ENCODE measurements at regions of chr1 and their contacts with region 1.

Region 1: GRCh38 chr1:32215629-32216480 is 6.3 kb downstream of the TMEM234 start:
- DNase-seq: peak in 2 of 3 donors; percentile 67 to 69
- ATAC-seq: peak; percentile 89 to 96 (median 94)
- H3K4me3 ChIP-seq: no peak overlapping the region
- H3K27ac ChIP-seq: peak overlapping the region in 1 of 3 donors; percentile 9
- H3K4me1 ChIP-seq: peaks cover 0 to under 1% (median 0%) of the 10 kb centered on the region in 4 donors
- H3K27me3 ChIP-seq: no peaks in the 10 kb centered on the region
- CTCF ChIP-seq: peak; percentile 73 to 87 (median 84)
- POLR2A ChIP-seq: no peak

Region 2: DNA sequence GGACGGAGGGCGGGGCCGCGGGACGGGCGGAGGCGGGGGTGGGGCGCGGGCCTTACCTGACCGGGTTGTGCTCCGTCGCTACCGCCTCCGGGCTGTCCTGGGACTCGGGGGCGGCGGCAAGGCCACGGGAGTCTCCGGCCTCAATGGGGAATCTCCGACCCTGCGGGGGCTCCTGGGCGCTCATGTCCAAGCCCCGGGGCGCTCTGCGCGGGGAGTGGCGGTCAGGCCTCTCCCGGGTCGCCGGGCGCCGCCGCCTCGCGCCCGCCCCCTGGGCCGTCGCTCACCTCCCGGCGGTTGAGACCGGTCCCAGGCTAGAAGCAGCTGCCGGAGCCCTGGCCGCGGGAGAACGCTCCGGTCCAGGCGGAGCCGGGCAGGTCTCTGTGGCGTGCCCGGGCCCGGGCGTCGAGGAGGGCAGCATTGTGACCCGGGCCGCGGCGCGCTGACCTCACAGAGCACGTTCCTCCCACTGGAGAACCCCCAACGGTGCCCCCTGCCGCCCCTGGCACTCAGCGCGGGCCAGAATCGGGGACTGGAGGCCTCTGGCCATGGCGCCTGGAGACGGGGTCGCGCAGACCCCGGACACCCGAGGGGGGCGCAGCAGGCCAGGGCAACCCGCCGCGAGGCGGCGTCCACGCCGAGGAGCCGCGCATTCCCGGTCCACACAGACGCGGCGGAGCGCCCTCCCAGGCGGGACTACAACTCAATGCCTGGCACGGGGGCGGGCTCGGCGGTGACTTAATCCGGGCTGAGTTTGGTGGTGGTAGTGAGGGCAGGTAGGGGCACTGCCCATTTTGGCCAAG is 146.0 kb after region 1 on chr1:
- intact Hi-C with region 1: loop called in 1 of 2 experiments (anchors 10 kb)
- DNase-seq: peak; percentile 67 to 79 (median 67)
- ATAC-seq: peak; percentile 66 to 72 (median 71)
- H3K4me3 ChIP-seq: peak overlapping the region; percentile 17 to 43 (median 36)
- H3K27ac ChIP-seq: peak overlapping the region; percentile 13 to 37 (median 29)
- H3K4me1 ChIP-seq: peaks cover 0 to 24% (median 6%) of the 10 kb centered on the region in 4 donors
- H3K27me3 ChIP-seq: no peaks in the 10 kb centered on the region
- CTCF ChIP-seq: peak; percentile 20 to 42 (median 34)
- POLR2A ChIP-seq: no peak

Region 3: GRCh38 chr1:32376199-32376598 is 160.3 kb after region 1 on chr1:
- intact Hi-C with region 1: no loop called
- DNase-seq: no peak
- ATAC-seq: peak in 1 of 4 donors; percentile 14
- H3K4me3 ChIP-seq: no peak overlapping the region
- H3K27ac ChIP-seq: no peak overlapping the region
- H3K4me1 ChIP-seq: no peaks in the 10 kb centered on the region
- H3K27me3 ChIP-seq: no peaks in the 10 kb centered on the region
- CTCF ChIP-seq: no peak
- POLR2A ChIP-seq: no peak